AG04449 (cell line): ENCODE measurements at regions of chr17 and their contacts with region 1.

Region 1: DNA sequence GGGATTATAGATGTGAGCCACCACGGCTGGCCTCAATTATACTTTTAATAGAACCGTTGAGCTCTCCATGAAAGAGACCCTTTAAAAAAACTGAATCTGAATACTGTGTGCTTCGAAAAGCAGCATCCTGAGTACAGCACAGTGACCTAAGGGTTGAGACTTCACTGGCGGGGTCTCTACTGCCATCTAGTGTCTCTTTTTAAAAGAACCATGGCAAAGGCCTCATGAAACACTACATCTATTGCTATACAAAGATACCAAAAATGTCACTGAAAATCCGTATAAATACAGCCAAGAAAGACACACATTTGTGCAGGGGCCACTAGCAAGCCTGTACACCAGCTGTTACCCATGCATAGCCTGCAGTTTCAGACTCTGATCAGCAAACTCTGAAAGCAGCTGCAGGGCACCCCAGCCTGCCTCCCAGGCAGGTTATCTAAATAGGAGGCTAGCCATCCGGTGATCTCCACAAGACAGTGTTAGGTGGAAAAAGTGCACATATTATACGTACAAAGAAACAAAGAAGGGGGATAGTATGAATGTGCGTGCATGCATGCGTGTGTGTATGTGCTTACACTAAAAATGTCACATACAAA is 35.3 kb downstream of the NPLOC4 start:
- DNase-seq: no peak
- H3K4me3 ChIP-seq: no peak overlapping the region
- CTCF ChIP-seq: peak; percentile 55

Region 2: DNA sequence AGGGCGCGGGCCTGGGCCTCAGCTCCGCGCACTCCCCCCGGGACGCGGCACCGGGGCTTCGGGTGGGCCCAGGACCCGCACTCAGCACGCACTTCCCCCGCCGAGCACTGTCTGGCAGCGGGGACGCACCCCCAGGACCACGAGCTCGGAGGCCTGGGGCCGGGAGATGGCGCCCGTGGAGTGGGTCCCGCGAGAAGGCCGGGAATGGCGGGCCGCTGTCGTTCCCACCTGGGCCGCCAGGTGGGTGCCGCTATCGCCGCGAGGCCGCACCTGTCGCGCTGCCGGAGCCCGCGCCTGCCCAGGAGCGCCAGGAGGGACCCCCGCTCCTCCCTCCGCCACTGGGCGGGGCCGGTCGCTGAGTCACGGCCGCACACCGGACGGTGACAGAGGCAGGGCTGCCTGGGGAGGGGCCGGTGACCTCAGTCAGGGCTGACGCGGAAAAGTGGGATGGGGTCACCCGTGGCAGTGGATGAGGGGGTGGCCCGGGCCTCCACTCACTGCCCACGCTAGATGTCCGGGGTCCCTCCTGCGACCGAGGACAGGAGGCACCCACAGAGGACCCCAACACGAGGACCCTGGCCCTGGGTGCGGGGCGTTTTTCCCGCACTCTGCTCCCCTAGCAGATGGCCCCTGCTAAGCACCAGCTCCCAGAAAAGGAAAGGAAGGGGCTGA is 82.2 kb before region 1 on chr17:
- CTCF ChIA-PET with region 1: interaction called, 59 read pairs
- POLR2A ChIA-PET with region 1: interaction called, 5 read pairs
- DNase-seq: no peak
- H3K4me3 ChIP-seq: peak overlapping the region; percentile 52
- CTCF ChIP-seq: peak; percentile 28

Region 3: DNA sequence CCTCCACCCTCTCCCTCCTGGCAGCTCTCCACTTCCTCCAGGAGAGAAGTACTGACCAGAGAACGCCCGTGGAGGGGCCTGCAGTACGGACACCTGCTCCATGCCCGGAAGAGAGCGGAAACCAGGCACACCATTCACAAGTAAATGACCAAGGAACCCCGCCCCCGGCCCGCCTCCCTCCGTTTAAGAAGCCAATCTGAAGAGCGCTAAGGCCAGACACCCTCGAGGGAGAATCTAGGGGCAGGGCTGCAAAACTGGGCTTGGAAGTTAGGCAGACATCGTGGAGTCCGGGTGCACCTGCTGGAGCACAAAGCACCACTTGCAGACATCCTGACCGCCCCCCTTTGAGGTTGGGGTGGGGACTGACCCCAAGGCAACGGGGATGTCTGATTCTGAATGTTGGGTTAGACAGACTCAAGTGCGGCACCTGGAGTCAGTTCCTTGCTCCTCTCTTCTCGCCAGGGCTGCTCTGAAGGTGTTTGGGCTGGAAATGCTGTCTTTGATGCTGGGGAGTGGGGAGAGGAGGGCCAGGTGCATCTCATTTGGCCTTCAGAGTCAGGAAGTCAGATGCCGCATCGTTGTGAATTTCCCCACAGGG is 48.5 kb before region 1 on chr17:
- CTCF ChIA-PET with region 1: interaction called, 89 read pairs
- POLR2A ChIA-PET with region 1: interaction called, 4 read pairs
- DNase-seq: no peak
- H3K4me3 ChIP-seq: peak overlapping the region; percentile 91
- CTCF ChIP-seq: peak; percentile 1

Region 4: DNA sequence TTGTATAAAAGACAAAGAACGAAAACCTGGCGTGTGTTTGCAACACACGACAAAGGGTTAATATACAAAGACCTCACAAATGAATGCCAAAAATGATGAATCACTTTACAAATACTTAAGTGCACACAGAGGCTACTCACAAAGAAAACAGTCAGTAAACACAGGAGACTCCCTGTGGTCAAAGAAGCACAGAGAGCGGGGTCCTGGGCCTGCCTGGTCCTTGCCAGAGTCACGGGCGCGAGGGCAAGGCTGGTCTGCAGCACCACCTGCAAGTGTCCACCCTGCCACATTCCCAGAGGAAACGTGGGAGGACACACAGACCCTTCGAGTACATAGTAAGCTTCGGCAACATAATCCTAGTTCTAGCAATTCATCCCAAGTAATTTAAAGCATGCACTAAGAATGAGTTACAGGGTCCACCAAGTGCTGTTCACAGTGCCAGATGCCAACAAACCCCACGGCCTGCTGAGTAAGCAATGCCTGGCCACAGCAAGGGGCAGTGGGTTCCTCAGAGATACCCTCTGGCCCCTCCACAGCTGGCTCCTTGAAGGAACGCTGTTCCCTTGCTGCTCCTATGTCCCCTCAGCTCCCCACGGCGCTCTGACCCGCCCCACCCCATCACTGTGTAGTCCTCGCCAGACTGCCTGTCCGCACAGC is 24.9 kb before region 1 on chr17:
- CTCF ChIA-PET with region 1: interaction called, 90 read pairs
- POLR2A ChIA-PET with region 1: no interaction called
- DNase-seq: no peak
- H3K4me3 ChIP-seq: peak overlapping the region; percentile 27
- CTCF ChIP-seq: peak; percentile 12

Region 5: GRCh38 chr17:81621494-81622130 is 20.0 kb after region 1 on chr17:
- CTCF ChIA-PET with region 1: interaction called, 64 read pairs
- POLR2A ChIA-PET with region 1: interaction called, 3 read pairs
- DNase-seq: no peak
- H3K4me3 ChIP-seq: no peak overlapping the region
- CTCF ChIP-seq: no peak

Region 6: GRCh38 chr17:82205719-82206508 is 604.3 kb after region 1 on chr17:
- CTCF ChIA-PET with region 1: no interaction called
- POLR2A ChIA-PET with region 1: no interaction called
- DNase-seq: peak; percentile 50
- H3K4me3 ChIP-seq: no peak overlapping the region
- CTCF ChIP-seq: peak; percentile 79